ENCODE measurements at regions of chr10 and their contacts with region 1.

Region 1: DNA sequence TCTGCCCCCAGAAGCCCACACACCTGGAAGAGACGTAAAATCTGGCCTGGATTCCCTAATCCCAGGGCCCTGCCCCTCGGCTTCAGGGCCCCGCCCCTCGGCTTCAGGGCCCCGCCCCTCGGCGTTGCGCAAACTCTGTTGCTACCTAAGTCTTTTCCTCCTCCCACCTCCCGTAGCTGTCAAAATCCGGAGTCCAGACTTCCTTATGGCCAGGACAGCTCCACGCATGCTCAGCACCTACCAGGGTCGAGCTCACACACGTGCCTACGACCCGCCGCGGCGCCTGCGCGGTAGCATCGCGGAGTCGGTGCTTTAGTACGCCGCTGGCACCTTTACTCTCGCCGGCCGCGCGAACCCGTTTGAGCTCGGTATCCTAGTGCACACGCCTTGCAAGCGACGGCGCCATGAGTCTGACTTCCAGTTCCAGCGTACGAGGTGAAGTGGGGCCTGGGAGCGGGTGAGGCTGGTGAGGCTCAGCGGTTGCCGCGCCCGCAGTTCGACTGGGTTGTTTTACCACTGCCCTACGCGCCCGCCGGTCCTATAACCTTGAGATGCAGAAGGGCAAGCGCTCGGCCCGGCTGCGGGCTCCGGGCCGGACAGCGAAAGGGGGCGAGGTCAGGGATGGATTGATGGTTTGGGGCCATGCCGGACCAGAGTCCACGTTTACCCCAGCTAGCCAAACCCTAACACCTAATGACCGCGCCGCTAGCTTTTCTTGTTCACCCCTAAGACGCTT is at the start of gene CISD1:
- DNase-seq: peak; percentile 95
- ATAC-seq: peak; percentile 68
- H3K4me3 Mint-ChIP-seq: peak within 1 kb of the TSS; percentile 97
- H3K27ac Mint-ChIP-seq: peak within 1 kb of the TSS; percentile 93
- H3K4me1 Mint-ChIP-seq: peaks cover 47% of the 10 kb centered on the region
- H3K27me3 Mint-ChIP-seq: no peaks in the 10 kb centered on the region
- CTCF ChIP-seq: no peak
- total RNA-seq, gene CISD1: 16.7 and 23.8 TPM in 2 replicates

Region 2: GRCh38 chr10:57925044-57925443 is 344.0 kb before region 1 on chr10:
- CTCF ChIA-PET with region 1: no interaction called
- POLR2A ChIA-PET with region 1: no interaction called
- intact Hi-C with region 1: no loop called
- DNase-seq: no peak
- ATAC-seq: no peak
- H3K4me3 Mint-ChIP-seq: no peak overlapping the region
- H3K27ac Mint-ChIP-seq: no peak overlapping the region
- H3K4me1 Mint-ChIP-seq: no peaks in the 10 kb centered on the region
- H3K27me3 Mint-ChIP-seq: no peaks in the 10 kb centered on the region
- CTCF ChIP-seq: no peak

Region 3: DNA sequence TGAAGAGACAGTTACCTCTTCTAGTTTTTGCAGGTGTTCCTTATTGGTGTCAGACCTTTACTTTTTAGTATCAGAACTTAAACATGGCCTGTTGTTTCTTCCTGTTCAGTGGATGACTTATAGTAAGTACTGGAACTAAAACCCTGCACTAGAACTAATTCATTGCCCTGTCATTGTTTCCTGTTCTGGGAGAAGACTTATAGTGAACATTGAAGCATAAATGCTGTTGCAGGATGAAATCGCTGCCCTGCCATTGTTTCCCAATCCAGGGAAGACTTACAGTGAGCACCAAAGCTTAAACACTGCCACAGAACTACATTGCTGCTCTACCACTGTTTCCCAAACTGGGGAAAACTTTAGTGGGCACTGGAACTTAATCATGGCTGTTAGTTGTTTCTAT is 14.4 kb before region 1 on chr10:
- CTCF ChIA-PET with region 1: no interaction called
- POLR2A ChIA-PET with region 1: no interaction called
- intact Hi-C with region 1: loop called (anchors 1 kb)
- DNase-seq: no peak
- ATAC-seq: no peak
- H3K4me3 Mint-ChIP-seq: no peak overlapping the region
- H3K27ac Mint-ChIP-seq: no peak overlapping the region
- H3K4me1 Mint-ChIP-seq: peaks cover 39% of the 10 kb centered on the region
- H3K27me3 Mint-ChIP-seq: no peaks in the 10 kb centered on the region
- CTCF ChIP-seq: no peak

Region 4: DNA sequence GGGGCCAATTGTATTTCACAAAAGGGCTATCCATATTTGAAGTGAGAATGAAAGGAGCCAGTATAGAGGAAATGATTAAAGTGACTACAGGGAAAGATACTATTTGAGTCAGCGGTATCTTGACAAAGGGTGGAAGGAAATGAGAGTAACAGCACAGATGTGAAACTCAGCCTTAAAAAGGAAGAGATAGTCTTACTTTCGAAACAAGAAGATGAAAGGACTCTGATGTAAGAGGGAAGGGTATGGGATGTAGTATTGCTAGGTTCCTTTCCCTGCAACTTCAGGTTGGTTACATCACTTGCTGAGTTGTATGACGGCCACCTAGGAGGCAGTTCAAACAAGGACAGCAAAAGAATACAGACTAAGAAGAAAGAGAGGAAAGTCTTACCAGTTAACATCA is 13.6 kb after region 1 on chr10:
- CTCF ChIA-PET with region 1: no interaction called
- POLR2A ChIA-PET with region 1: interaction called, 5 read pairs
- intact Hi-C with region 1: loop called (anchors 1 kb)
- DNase-seq: no peak
- ATAC-seq: peak; percentile 90
- H3K4me3 Mint-ChIP-seq: peak overlapping the region; percentile 57
- H3K27ac Mint-ChIP-seq: peak overlapping the region; percentile 88
- H3K4me1 Mint-ChIP-seq: peaks cover 27% of the 10 kb centered on the region
- H3K27me3 Mint-ChIP-seq: no peaks in the 10 kb centered on the region
- CTCF ChIP-seq: no peak

Region 5: GRCh38 chr10:58291538-58292174 is 22.6 kb after region 1 on chr10:
- CTCF ChIA-PET with region 1: interaction called, 12 read pairs
- POLR2A ChIA-PET with region 1: interaction called, 3 read pairs
- intact Hi-C with region 1: loop called (anchors 1 kb)
- DNase-seq: no peak
- ATAC-seq: peak; percentile 79
- H3K4me3 Mint-ChIP-seq: no peak overlapping the region
- H3K27ac Mint-ChIP-seq: no peak overlapping the region
- H3K4me1 Mint-ChIP-seq: no peaks in the 10 kb centered on the region
- H3K27me3 Mint-ChIP-seq: no peaks in the 10 kb centered on the region
- CTCF ChIP-seq: peak; percentile 44

Region 6: DNA sequence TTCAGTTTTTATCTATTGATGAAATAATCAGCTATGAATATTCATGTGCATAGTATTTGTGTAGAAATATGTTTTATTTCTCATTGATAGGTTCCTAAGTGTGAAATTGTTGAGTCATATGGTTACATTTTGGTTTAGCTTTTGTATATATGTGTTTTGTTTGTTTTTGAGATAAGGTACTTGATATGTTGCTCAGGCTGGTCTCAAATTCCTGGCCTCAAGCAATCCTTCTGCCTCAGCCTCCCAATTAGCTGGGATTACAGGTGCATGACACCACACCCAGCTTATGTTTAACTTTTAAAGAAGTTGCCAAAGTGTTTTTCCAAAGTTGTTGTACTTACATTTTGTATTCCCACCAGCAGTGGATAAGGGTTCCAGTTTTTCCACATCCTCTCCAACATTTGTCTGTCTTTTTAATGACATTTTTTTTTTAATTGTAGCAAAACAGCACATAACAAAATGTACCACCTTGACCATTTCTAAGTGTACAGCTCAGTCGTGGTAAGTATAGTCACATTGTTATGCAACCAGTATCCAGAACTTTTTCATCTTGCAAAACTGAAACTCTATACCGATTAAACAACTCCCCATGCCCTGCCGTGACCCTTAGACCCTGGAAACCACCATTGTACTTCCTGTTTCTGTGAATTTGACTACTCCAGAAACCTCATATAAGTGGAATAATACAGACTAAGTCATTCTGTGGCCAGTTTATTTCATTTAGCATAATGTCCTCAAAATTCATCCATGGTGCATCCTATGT is 53.2 kb after region 1 on chr10:
- CTCF ChIA-PET with region 1: no interaction called
- POLR2A ChIA-PET with region 1: no interaction called
- intact Hi-C with region 1: loop called (anchors 1 kb)
- DNase-seq: no peak
- ATAC-seq: peak; percentile 72
- H3K4me3 Mint-ChIP-seq: peak overlapping the region; percentile 3
- H3K27ac Mint-ChIP-seq: peak overlapping the region; percentile 26
- H3K4me1 Mint-ChIP-seq: peaks cover 15% of the 10 kb centered on the region
- H3K27me3 Mint-ChIP-seq: peaks cover 2% of the 10 kb centered on the region
- CTCF ChIP-seq: no peak

Region 7: GRCh38 chr10:58334817-58335305 is 65.8 kb after region 1 on chr10 and contains the start of gene UBE2D1:
- CTCF ChIA-PET with region 1: no interaction called
- POLR2A ChIA-PET with region 1: interaction called, 10 read pairs
- intact Hi-C with region 1: loop called (anchors 1 kb)
- DNase-seq: peak; percentile 81
- ATAC-seq: peak; percentile 97
- H3K4me3 Mint-ChIP-seq: peak within 1 kb of the TSS; percentile 95
- H3K27ac Mint-ChIP-seq: peak within 1 kb of the TSS; percentile 69
- H3K4me1 Mint-ChIP-seq: peaks cover 32% of the 10 kb centered on the region
- H3K27me3 Mint-ChIP-seq: no peaks in the 10 kb centered on the region
- CTCF ChIP-seq: no peak
- total RNA-seq, gene UBE2D1: 13.3 and 15.0 TPM in 2 replicates

Region 8: GRCh38 chr10:58818900-58819299 is 549.9 kb after region 1 on chr10:
- CTCF ChIA-PET with region 1: no interaction called
- POLR2A ChIA-PET with region 1: no interaction called
- intact Hi-C with region 1: no loop called
- DNase-seq: no peak
- ATAC-seq: no peak
- H3K4me3 Mint-ChIP-seq: no peak overlapping the region
- H3K27ac Mint-ChIP-seq: no peak overlapping the region
- H3K4me1 Mint-ChIP-seq: no peaks in the 10 kb centered on the region
- H3K27me3 Mint-ChIP-seq: no peaks in the 10 kb centered on the region
- CTCF ChIP-seq: no peak

Region 9: GRCh38 chr10:59885430-59886134 is 1616.5 kb after region 1 on chr10:
- CTCF ChIA-PET with region 1: no interaction called
- POLR2A ChIA-PET with region 1: no interaction called
- intact Hi-C with region 1: loop called (anchors 5 kb)
- DNase-seq: peak; percentile 69
- ATAC-seq: peak; percentile 89
- H3K4me3 Mint-ChIP-seq: peak overlapping the region; percentile 45
- H3K27ac Mint-ChIP-seq: peak overlapping the region; percentile 68
- H3K4me1 Mint-ChIP-seq: peaks cover 87% of the 10 kb centered on the region
- H3K27me3 Mint-ChIP-seq: no peaks in the 10 kb centered on the region
- CTCF ChIP-seq: no peak